Activated naive CD4-positive, alpha-beta T cell treated with anti-CD3 and anti-CD28 coated beads for 36 hours (primary cell): ENCODE measurements at regions of chr6 and their contacts with region 1.

Region 1: DNA sequence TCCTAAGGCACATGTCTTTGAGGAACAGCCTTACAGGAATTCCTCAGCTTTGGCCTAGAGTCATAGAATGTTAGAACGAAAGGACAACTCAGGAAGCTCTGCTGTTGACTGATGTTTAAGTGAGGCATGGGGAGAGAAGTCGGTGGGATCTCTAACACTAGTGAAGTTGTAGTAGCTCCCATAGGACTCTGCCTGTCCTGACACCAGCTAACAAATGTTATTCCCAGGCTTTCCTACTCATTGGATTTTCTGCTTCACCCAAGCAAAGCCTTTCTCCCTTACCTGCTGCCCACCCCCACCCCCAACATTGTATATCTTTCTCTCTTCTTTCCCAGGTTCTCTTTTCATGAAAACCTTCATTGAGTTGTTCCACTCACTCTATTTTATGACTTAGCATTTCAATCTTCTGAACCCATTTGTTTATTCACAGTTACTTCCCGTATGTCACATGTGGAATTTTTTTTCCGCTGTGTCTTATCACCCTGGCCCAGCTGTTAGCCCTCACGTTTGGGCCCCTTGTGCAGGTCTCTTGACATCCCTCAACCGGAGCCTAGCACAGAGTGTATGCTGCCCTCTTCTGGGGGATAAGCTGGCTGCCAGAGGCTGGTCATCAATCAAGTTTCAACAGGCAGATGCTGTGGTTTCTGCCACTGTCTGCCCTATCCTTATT is 39.2 kb upstream of the RNF8 start:
- DNase-seq: peak; percentile 68
- H3K4me3 Mint-ChIP-seq: no peak overlapping the region
- H3K27ac Mint-ChIP-seq: no peak overlapping the region
- H3K4me1 Mint-ChIP-seq: peaks cover 2% of the 10 kb centered on the region
- H3K27me3 Mint-ChIP-seq: no peaks in the 10 kb centered on the region

Region 2: DNA sequence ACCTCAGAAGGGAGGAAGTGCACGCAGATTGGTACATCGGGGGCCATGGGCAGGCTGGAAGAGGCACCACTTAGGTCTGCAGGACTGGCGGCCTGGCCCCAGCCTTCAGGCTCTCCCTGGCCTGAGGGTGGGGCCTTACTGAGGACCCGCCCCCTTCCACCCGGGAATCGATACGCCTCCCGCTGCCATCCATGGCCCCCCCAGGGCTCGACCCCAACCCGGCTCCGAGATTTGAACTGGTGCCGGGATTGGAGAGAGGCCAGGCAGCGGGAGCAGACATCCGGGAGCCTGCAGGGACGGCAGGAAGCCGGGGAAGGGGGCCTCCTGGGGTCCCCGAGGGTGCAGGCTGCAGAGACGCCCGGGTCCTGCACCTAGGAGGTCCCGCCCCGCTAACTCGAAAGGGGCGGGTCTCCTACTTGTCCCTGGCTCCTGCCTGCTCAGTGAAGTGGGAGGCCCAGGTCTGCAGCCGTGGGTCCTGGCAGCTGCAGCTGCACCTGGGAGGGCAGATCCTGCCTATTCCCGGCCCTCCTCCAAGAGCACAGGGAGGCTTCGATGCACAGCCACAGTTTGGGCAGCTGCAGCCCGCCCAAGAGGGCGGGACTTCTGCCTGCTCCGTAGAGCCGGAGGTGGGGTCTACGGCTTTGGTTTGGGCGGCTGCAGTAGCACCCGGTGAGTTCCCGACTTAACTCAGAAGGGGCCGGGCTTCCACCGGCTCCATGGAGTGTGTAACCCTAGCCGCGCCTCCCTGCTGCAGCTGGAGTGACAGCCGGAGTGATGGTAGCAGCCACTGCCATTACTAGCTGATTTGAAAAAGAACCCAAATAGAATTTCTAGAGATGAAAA is 92.3 kb before region 1 on chr6:
- CTCF ChIA-PET with region 1: interaction called, 6 read pairs
- intact Hi-C with region 1: loop called (anchors 1 kb)
- DNase-seq: peak; percentile 90
- H3K4me3 Mint-ChIP-seq: peak overlapping the region; percentile 56
- H3K27ac Mint-ChIP-seq: peak overlapping the region; percentile 26
- H3K4me1 Mint-ChIP-seq: peaks cover 24% of the 10 kb centered on the region
- H3K27me3 Mint-ChIP-seq: no peaks in the 10 kb centered on the region

Region 3: DNA sequence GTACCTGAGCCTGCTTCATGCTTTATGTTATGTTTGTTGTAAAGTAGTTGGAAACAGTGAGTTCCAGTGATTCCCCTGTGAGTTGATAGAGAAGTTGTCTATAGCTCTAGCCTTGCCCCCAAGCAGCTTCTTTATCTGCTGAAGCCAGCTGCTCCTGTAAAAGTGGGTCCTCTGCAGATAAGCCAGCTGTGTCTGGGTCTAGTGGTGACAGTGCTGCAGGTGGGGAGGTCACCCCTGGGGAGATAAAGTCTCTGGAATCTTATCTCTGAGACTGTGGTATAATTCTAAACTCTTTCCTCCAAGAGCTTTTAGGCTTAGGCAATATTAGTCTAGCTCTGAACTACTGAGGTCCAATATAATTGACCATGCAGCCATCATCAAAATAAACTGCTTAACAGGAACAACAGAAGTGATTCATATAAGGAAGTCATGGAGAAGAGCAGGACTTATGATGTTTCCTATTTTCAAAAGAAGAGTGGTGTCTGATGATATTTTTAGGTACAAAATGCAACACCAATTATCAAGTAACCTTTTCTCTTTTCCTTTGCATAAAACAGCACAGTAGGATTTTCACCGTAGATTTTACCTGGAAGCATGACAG is 12.4 kb before region 1 on chr6:
- CTCF ChIA-PET with region 1: interaction called, 13 read pairs
- intact Hi-C with region 1: no loop called
- DNase-seq: no peak
- H3K4me3 Mint-ChIP-seq: no peak overlapping the region
- H3K27ac Mint-ChIP-seq: no peak overlapping the region
- H3K4me1 Mint-ChIP-seq: no peaks in the 10 kb centered on the region
- H3K27me3 Mint-ChIP-seq: no peaks in the 10 kb centered on the region

Region 4: DNA sequence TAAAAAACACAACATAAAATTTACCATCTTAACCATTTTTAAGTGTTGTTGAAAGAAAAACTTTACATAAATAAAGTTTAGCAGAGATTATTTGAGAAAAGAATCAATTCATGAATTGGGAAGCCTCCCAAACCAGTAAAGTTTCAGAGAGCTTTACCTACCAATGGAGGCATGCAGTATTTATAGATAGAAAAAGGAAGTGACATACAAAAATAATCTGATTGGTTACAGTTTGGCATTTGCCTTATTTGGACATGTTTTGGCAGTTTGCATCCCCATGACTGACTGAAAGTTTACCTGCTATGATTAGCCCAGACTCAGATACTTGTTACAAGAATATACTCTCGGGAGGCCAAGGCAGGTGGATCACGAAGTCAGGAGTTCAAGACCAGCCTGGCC is 114.7 kb after region 1 on chr6:
- CTCF ChIA-PET with region 1: no interaction called
- intact Hi-C with region 1: no loop called
- DNase-seq: no peak
- H3K4me3 Mint-ChIP-seq: no peak overlapping the region
- H3K27ac Mint-ChIP-seq: no peak overlapping the region
- H3K4me1 Mint-ChIP-seq: peaks cover 13% of the 10 kb centered on the region
- H3K27me3 Mint-ChIP-seq: no peaks in the 10 kb centered on the region